IMR-90 (cell line): ENCODE measurements at regions of chr7 and their contacts with region 1.

Region 1: GRCh38 chr7:38178004-38178694 is at the start of gene STARD3NL:
- DNase-seq: peak; percentile 100
- ATAC-seq: peak; percentile 98
- H3K4me3 ChIP-seq: peak within 1 kb of the TSS; percentile 65
- H3K27ac ChIP-seq: peak within 1 kb of the TSS; percentile 83
- H3K4me1 ChIP-seq: peaks cover 6% of the 10 kb centered on the region
- H3K27me3 ChIP-seq: no peaks in the 10 kb centered on the region
- CTCF ChIP-seq: no peak
- POLR2A ChIP-seq: peak; percentile 77
- RAD21 ChIP-seq: no peak
- total RNA-seq, gene STARD3NL: 69.7 and 102 TPM in 2 replicates

Region 2: GRCh38 chr7:36659172-36659516 is 1519.0 kb before region 1 on chr7:
- CTCF ChIA-PET with region 1: no interaction called
- POLR2A ChIA-PET with region 1: no interaction called
- dilution Hi-C with region 1: no loop called
- in situ Hi-C with region 1: no loop called
- intact Hi-C with region 1: loop called (anchors 10 kb)
- DNase-seq: peak; percentile 93
- ATAC-seq: peak; percentile 78
- H3K4me3 ChIP-seq: no peak overlapping the region
- H3K27ac ChIP-seq: peak overlapping the region; percentile 9; the same call in 1 of the 2 replicates
- H3K4me1 ChIP-seq: peaks cover 6% of the 10 kb centered on the region
- H3K27me3 ChIP-seq: no peaks in the 10 kb centered on the region
- CTCF ChIP-seq: no peak
- POLR2A ChIP-seq: no peak
- RAD21 ChIP-seq: no peak

Region 3: DNA sequence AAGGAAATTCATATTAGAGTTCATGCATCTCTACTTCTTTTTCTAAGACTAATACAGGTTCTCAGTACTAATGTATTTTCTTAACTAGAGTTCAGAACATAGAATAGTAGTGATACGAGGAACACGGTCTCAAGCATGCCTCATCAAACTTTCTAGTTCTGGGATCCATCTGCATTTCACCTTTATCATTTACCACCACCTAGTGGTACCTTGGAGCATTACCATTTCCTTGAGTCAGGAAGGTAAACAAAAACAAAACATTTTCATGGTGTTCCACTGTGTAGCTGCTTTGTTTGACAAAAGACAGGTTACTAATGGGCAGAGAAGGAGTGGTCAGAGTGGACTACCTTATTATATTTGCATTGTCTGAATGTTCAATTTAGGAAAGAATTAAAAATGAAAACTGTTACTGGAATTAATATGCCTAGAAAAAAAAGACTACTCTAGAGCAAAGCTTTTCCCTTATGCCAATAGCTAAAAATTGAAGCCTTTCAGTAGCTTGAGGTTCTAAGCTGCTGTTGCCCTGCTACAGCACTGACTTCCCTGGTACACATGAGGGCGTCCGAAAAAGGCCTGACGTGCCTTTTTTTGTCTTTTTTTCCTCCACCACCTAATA is 44.4 kb after region 1 on chr7:
- CTCF ChIA-PET with region 1: interaction called, 5 read pairs
- POLR2A ChIA-PET with region 1: no interaction called
- dilution Hi-C with region 1: no loop called
- in situ Hi-C with region 1: no loop called
- intact Hi-C with region 1: loop called (anchors 2 kb)
- DNase-seq: peak; percentile 62
- ATAC-seq: peak; percentile 79
- H3K4me3 ChIP-seq: no peak overlapping the region
- H3K27ac ChIP-seq: no peak overlapping the region
- H3K4me1 ChIP-seq: peaks cover 3% of the 10 kb centered on the region; the same call in 1 of the 2 replicates
- H3K27me3 ChIP-seq: no peaks in the 10 kb centered on the region
- CTCF ChIP-seq: peak; percentile 83
- POLR2A ChIP-seq: no peak
- RAD21 ChIP-seq: peak; percentile 84

Region 4: GRCh38 chr7:38840736-38841460 is 662.7 kb after region 1 on chr7:
- CTCF ChIA-PET with region 1: no interaction called
- POLR2A ChIA-PET with region 1: no interaction called
- dilution Hi-C with region 1: no loop called
- in situ Hi-C with region 1: no loop called
- intact Hi-C with region 1: no loop called
- DNase-seq: peak; percentile 93
- ATAC-seq: peak; percentile 92
- H3K4me3 ChIP-seq: no peak overlapping the region
- H3K27ac ChIP-seq: peak overlapping the region; percentile 92
- H3K4me1 ChIP-seq: peaks cover 9% of the 10 kb centered on the region
- H3K27me3 ChIP-seq: no peaks in the 10 kb centered on the region
- CTCF ChIP-seq: no peak
- POLR2A ChIP-seq: no peak
- RAD21 ChIP-seq: no peak